Endothelial cell of umbilical vein (primary cell): ENCODE measurements at regions of chr6 and their contacts with region 1.

Region 1: DNA sequence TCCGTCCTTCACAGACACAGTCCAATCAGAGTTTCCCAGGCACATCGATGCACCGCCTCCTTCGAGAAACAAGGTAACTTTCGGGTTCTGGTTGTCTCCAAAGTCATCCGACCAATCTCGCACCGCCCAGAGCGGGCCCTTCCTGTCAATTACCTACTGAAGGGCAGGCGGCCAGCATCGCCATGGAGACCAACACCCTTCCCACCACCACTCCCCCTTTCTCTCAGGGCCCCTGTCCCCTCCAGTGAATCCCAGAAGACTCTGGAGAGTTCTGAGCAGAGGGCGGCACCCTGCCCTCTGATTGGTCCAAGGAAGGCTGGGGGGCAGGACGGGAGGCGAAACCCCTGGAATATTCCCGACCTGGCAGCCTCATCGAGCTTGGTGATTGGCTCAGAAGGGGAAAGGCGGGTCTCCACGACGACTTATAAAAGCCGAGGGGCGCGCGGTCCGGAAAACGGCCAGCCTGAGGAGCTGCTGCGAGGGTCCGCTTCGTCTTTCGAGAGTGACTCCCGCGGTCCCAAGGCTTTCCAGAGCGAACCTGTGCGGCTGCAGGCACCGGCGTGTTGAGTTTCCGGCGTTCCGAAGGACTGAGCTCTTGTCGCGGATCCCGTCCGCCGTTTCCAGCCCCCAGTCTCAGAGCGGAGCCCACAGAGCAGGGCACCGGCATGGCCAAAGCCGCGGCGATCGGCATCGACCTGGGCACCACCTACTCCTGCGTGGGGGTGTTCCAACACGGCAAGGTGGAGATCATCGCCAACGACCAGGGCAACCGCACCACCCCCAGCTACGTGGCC is at the start of gene HSPA1B:
- DNase-seq: peak; percentile 100
- H3K4me3 ChIP-seq: peak within 1 kb of the TSS in 2 of 3 experiments; percentile 41 to 45
- H3K27ac ChIP-seq: peak within 1 kb of the TSS; percentile 56
- H3K4me1 ChIP-seq: peaks cover 17% of the 10 kb centered on the region
- H3K27me3 ChIP-seq: no peaks in the 10 kb centered on the region
- CTCF ChIP-seq: no peak
- POLR2A ChIP-seq: peak; percentile 99
- total RNA-seq, gene HSPA1B: 49.3 and 54.0 TPM in 2 replicates

Region 2: DNA sequence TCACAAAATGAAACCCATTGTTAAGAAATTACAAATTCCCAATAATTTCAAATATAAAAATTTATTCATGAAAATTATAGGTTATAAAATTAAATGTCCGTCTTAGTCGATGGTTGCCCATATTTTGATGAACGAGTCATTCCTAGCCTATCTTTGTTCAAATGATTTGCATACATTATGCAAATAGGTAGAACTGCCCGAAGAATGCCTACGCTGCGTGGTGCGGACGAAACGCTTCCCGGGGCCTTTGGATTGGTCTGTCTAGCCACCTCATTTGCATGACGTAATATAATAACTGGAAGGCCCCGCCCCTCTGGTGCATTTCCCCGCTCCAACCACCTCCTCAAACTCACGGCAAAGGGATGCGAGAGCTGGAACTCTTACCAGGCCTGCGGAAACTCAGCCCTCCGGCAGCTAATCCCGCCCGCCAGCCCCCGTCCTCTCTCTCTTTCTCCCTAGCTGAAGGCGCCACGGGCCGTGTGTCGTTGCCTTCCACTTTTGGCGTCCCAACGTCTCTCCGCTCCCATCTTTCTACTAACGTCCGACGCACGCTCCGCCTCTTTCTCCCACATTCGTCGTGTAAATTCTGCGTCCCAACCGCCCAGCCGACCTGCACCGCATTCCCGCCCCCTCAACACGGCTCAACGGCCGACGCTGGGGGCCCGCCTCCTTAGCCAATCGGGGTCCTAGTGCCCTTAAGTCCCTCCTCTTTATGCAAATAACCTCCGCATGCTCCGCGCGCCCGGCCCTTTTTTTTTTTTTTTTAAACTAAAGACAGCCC is 207.5 kb before region 1 on chr6:
- CTCF ChIA-PET with region 1: no interaction called
- POLR2A ChIA-PET with region 1: no interaction called
- dilution Hi-C with region 1: no loop called
- intact Hi-C with region 1: loop called (anchors 2 kb)
- DNase-seq: peak; percentile 100
- H3K4me3 ChIP-seq: peak overlapping the region in 2 of 3 experiments; percentile 57 to 80
- H3K27ac ChIP-seq: peak overlapping the region; percentile 95
- H3K4me1 ChIP-seq: peaks cover 13% of the 10 kb centered on the region
- H3K27me3 ChIP-seq: no peaks in the 10 kb centered on the region
- CTCF ChIP-seq: no peak
- POLR2A ChIP-seq: peak; percentile 73

Region 3: GRCh38 chr6:31680840-31681671 is 146.4 kb before region 1 on chr6 and contains the start of gene LY6G5C:
- CTCF ChIA-PET with region 1: interaction called, 44 read pairs
- POLR2A ChIA-PET with region 1: interaction called, 7 read pairs
- dilution Hi-C with region 1: no loop called
- intact Hi-C with region 1: loop called (anchors 1 kb)
- DNase-seq: peak; percentile 81
- H3K4me3 ChIP-seq: peak within 1 kb of the TSS; percentile 18 to 59 (median 47)
- H3K27ac ChIP-seq: peak within 1 kb of the TSS; percentile 18
- H3K4me1 ChIP-seq: peaks cover 8% of the 10 kb centered on the region
- H3K27me3 ChIP-seq: no peaks in the 10 kb centered on the region
- CTCF ChIP-seq: peak; percentile 60 to 66
- POLR2A ChIP-seq: peak; percentile 68
- total RNA-seq, gene LY6G5C: 5.2 and 8.2 TPM in 2 replicates

Region 4: GRCh38 chr6:31739639-31740396 is 87.7 kb before region 1 on chr6 and contains the start of gene MSH5:
- CTCF ChIA-PET with region 1: interaction called, 8 read pairs
- POLR2A ChIA-PET with region 1: interaction called, 19 read pairs
- dilution Hi-C with region 1: no loop called
- intact Hi-C with region 1: no loop called
- DNase-seq: peak; percentile 100
- H3K4me3 ChIP-seq: peak within 1 kb of the TSS; percentile 23 to 76 (median 61)
- H3K27ac ChIP-seq: peak within 1 kb of the TSS; percentile 94
- H3K4me1 ChIP-seq: peaks cover 31% of the 10 kb centered on the region
- H3K27me3 ChIP-seq: no peaks in the 10 kb centered on the region
- CTCF ChIP-seq: no peak
- POLR2A ChIP-seq: peak; percentile 65
- total RNA-seq, gene MSH5: 43.2 and 43.8 TPM in 2 replicates

Region 5: DNA sequence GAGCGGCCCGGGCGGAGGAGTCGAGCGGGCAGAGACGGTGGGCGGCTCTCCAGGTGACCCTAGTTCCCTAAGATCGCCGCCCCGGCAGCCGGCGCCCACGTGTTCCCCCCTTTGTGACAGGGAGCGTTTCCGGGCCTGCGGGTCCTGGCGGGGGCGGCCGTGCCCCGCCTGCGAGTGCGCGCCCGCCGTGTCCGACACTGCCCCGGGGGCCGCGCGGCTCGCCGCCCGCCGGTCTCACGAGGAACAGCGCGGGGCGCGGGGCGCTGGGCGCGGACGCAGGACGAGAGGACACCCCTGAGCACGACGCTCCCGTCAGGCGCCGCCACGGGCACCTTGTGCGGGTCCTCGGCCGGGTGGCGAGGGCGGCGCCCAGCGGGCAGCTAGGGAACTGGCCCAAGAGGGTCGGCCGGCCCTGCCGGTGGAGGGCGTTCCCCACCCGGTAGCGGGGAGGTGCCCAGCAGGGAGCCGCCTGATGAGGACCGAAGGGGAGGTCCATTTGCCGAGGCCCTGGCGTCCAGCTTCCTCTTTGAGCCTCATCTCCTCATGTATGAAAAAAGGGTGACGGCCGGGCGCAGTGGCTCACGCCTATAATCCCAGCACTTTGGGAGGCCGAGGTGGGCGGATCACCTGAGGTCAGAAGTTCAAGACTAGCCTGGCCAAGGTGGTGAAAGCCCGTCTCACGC is 31.7 kb before region 1 on chr6 and contains the start of gene VARS1:
- CTCF ChIA-PET with region 1: interaction called, 30 read pairs
- POLR2A ChIA-PET with region 1: interaction called, 11 read pairs
- dilution Hi-C with region 1: no loop called
- intact Hi-C with region 1: loop called (anchors 1 kb)
- DNase-seq: peak; percentile 87
- H3K4me3 ChIP-seq: peak within 1 kb of the TSS; percentile 49 to 71 (median 67)
- H3K27ac ChIP-seq: peak within 1 kb of the TSS; percentile 89
- H3K4me1 ChIP-seq: peaks cover 15% of the 10 kb centered on the region
- H3K27me3 ChIP-seq: no peaks in the 10 kb centered on the region
- CTCF ChIP-seq: peak; percentile 78 to 88
- POLR2A ChIP-seq: no peak
- total RNA-seq, gene VARS1: 121 and 125 TPM in 2 replicates

Region 6: DNA sequence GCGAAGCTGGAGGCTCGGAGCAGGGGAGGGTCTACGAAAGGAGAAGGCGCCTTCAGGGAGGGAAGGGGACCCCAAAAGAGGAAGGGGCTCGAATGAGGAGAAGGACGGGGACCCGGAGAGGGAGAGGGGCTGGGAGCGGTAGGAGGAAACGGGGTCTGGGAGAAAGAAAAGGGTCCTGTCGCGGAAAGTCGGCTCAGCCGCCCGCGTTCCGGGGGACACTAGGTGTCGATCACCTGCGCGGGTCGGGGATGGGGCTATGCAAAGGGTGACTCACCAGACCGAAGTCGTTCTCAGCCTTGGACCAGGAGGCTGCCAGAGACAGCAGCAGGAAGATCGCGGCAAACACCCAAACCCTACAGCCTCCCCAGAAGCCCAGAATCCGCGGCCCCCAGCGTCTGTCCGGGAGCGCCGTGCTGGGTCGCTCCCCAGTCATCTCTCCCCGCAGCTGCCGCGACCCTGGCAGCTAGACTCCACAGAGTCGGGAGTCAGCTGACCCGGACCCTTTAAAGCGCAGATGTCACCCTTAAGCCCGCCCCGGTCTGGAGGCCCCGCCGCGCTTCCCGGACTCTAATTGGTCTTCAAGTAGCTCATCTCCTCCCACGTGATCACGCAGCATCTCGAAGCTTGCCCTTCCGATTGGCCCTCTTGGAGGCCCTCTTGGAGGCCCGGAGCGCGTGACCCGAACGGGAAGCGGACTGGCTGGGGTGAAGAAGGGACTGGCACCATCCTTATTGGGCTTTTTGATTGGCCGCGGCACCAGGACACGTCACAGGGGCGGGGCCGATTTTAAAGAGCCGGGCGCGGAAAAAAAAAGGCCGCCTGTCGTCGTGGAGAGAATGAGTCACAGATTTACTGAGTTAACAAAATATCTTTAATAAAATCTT is 35.1 kb after region 1 on chr6 and contains the start of gene NEU1:
- CTCF ChIA-PET with region 1: interaction called, 4 read pairs
- POLR2A ChIA-PET with region 1: interaction called, 17 read pairs
- dilution Hi-C with region 1: no loop called
- intact Hi-C with region 1: loop called (anchors 2 kb)
- DNase-seq: peak; percentile 100
- H3K4me3 ChIP-seq: peak within 1 kb of the TSS; percentile 71 to 88 (median 83)
- H3K27ac ChIP-seq: peak within 1 kb of the TSS; percentile 77
- H3K4me1 ChIP-seq: peaks cover 7% of the 10 kb centered on the region
- H3K27me3 ChIP-seq: no peaks in the 10 kb centered on the region
- CTCF ChIP-seq: no peak
- POLR2A ChIP-seq: peak; percentile 99
- total RNA-seq, gene NEU1: 61.3 and 62.8 TPM in 2 replicates

Region 7: GRCh38 chr6:32340242-32340641 is 512.8 kb after region 1 on chr6:
- CTCF ChIA-PET with region 1: no interaction called
- POLR2A ChIA-PET with region 1: no interaction called
- dilution Hi-C with region 1: no loop called
- intact Hi-C with region 1: no loop called
- DNase-seq: no peak
- H3K4me3 ChIP-seq: no peak overlapping the region
- H3K27ac ChIP-seq: no peak overlapping the region
- H3K4me1 ChIP-seq: no peaks in the 10 kb centered on the region
- H3K27me3 ChIP-seq: peaks cover 0 to 3% of the 10 kb centered on the region in 2 experiments
- CTCF ChIP-seq: no peak
- POLR2A ChIP-seq: no peak